PC-9 (cell line): ENCODE measurements at regions of chr14 and their contacts with region 1.

Region 1: DNA sequence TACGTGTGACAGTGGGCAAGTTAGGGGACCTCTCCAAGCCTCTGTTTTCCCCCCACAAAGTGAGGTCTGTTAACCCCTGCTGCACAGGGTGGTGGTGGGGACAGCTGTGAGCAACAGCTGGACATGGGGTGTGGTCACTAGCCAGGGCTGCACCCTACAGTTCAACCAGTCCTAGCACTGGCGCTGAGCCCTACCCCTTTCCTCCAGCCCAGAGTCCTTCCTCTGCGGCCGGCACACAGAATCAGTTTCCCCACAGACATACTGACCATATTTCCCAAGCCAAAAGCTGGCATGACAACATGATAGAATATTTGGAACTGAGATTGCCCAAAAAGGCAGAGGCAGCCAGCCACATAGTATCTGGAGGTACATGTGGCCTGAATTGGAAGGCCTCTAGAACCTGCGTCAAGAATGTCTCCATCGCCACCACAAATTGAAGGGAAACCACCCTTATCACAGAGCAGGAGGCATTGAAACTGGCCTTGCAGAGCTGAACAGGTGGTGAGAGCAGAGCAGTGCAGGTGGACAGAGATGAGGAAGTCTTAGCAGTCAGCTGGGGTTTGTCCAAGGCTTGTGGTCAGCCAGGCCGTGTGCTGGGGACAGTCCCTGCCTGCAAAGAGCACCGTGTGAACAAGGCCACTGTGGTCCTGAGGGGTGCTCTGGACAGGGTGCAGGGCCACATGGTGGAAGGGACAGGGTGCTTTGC is 21.2 kb downstream of the DEGS2 start:
- DNase-seq: no peak
- H3K4me3 ChIP-seq: no peak overlapping the region
- H3K27ac ChIP-seq: no peak overlapping the region
- H3K4me1 ChIP-seq: peaks cover 17% of the 10 kb centered on the region
- H3K27me3 ChIP-seq: no peaks in the 10 kb centered on the region
- CTCF ChIP-seq: no peak

Region 2: DNA sequence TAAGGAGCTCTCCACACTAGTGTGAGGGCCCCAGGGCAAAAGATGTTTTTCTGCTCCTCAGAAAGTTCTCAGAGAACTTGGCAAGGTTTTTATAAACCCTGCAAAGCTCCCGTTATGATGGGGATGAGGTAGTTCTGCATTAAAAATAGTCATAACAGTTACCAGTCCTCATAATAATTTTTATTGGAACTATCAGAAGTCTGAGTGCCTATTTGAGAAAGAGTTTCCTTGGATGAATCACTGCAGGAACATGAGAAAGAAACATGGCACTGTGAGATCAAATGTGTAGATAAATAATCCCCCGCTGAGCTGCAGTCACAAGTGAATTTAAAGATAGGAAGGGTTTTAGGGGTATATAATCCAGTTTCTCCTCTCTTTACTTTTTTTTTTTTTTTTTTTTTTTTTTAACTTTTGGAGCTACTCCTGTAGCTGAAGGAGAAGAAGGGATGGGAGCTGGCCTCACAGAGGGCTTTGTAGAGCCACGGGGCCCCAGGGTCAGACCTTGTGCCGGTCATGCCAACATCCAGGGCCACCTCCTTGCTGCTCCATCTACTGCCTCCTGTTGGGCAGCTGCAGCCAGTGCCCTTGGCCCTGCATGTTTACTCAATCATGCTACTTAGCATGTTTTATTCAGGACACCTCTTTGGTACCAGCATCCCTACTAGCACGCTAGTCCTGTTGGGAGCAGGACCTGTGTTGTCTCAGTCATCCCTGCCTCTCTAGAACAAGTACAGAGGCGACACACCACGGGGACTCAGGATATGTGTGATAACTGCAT is 33.5 kb before region 1 on chr14:
- CTCF ChIA-PET with region 1: no interaction called
- POLR2A ChIA-PET with region 1: no interaction called
- intact Hi-C with region 1: no loop called
- DNase-seq: peak in 1 of 2 experiments; percentile 38
- H3K4me3 ChIP-seq: no peak overlapping the region
- H3K27ac ChIP-seq: no peak overlapping the region
- H3K4me1 ChIP-seq: no peaks in the 10 kb centered on the region
- H3K27me3 ChIP-seq: no peaks in the 10 kb centered on the region
- CTCF ChIP-seq: no peak

Region 3: GRCh38 chr14:100149851-100150611 is 11.8 kb after region 1 on chr14:
- CTCF ChIA-PET with region 1: no interaction called
- POLR2A ChIA-PET with region 1: interaction called, 17 read pairs
- intact Hi-C with region 1: no loop called
- DNase-seq: peak; percentile 35 to 43
- H3K4me3 ChIP-seq: no peak overlapping the region
- H3K27ac ChIP-seq: no peak overlapping the region
- H3K4me1 ChIP-seq: peaks cover 14% of the 10 kb centered on the region
- H3K27me3 ChIP-seq: no peaks in the 10 kb centered on the region
- CTCF ChIP-seq: no peak